Common myeloid progenitor, CD34-positive (primary cell): ENCODE measurements at regions of chr1 and their contacts with region 1.

Region 1: GRCh38 chr1:201023517-201023902 is at the start of gene KIF21B:
- DNase-seq: peak; percentile 72 to 83 (median 81)
- H3K4me3 ChIP-seq: peak within 1 kb of the TSS; percentile 30 to 76 (median 65)
- H3K27ac ChIP-seq: no peak within 1 kb of the TSS
- H3K4me1 ChIP-seq: peaks cover 31 to 94% (median 89%) of the 10 kb centered on the region in 4 experiments
- H3K27me3 ChIP-seq: no peaks in the 10 kb centered on the region

Region 2: DNA sequence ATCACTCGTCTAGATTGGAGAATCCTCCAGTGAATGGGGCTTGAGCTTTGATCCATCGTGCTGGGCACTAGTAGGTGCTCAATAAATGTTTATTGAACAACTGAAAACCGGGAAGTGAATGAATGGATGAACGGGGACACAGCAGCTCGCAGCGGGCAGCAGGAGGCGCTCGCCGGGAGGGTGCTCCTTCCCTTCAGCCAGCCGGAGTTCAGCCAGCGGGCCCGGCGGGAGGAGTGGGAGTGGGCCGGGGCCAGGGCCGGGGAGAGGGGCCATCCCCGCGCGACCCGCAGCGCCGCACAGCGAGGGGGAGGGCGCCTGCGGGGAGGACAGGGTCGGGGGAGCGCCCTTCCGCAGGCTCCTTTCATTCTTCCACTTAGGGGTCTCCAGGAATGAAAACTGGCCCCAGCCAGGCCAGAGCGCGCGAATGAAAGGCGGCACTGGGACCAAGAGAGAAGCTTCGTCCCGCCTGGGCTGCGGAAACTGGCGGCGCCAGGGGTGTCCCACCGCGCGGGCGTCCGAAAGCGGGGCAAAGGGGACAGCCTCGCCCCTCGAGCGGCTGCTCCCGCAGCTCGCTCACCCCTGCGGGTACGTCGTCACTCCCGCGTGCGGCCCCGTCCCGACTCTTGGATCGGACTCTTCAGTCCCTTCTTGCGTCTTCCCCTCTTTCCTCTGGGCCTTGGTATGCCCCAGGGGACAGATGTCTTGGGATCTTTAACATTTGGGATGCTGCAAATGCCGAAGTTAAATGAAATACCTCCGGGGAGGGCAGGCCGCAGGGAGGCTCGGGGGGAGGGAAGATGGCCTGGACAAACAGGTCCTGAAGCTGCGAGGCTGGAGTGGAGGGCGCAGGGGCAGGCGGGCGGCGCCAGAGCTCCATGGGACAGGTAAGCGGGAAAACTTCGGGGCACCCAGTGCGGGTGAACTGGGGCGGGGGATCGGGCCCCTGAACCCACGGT is 132.4 kb before region 1 on chr1:
- CTCF ChIA-PET with region 1: no interaction called
- POLR2A ChIA-PET with region 1: no interaction called
- DNase-seq: peak; percentile 17 to 31 (median 26)
- H3K4me3 ChIP-seq: peak overlapping the region; percentile 11 to 66 (median 54)
- H3K27ac ChIP-seq: no peak overlapping the region
- H3K4me1 ChIP-seq: peaks cover 0 to 64% (median 38%) of the 10 kb centered on the region in 4 experiments
- H3K27me3 ChIP-seq: peaks cover 0 to 50% (median 32%) of the 10 kb centered on the region in 5 experiments

Region 3: GRCh38 chr1:200951016-200951415 is 72.5 kb before region 1 on chr1:
- CTCF ChIA-PET with region 1: no interaction called
- POLR2A ChIA-PET with region 1: no interaction called
- DNase-seq: no peak
- H3K4me3 ChIP-seq: no peak overlapping the region
- H3K27ac ChIP-seq: no peak overlapping the region
- H3K4me1 ChIP-seq: no peaks in the 10 kb centered on the region
- H3K27me3 ChIP-seq: no peaks in the 10 kb centered on the region

Region 4: GRCh38 chr1:200971955-200972711 is 51.4 kb before region 1 on chr1:
- CTCF ChIA-PET with region 1: interaction called, 62 read pairs
- POLR2A ChIA-PET with region 1: no interaction called
- DNase-seq: peak; percentile 53 to 72 (median 64)
- H3K4me3 ChIP-seq: no peak overlapping the region
- H3K27ac ChIP-seq: no peak overlapping the region
- H3K4me1 ChIP-seq: no peaks in the 10 kb centered on the region
- H3K27me3 ChIP-seq: no peaks in the 10 kb centered on the region

Region 5: GRCh38 chr1:200979574-200980451 is 43.7 kb before region 1 on chr1:
- CTCF ChIA-PET with region 1: interaction called, 36 read pairs
- POLR2A ChIA-PET with region 1: no interaction called
- DNase-seq: peak; percentile 20 to 35 (median 22)
- H3K4me3 ChIP-seq: no peak overlapping the region
- H3K27ac ChIP-seq: no peak overlapping the region
- H3K4me1 ChIP-seq: peaks cover 0 to 6% (median 0%) of the 10 kb centered on the region in 4 experiments
- H3K27me3 ChIP-seq: no peaks in the 10 kb centered on the region

Region 6: GRCh38 chr1:200990114-200990513 is 33.4 kb before region 1 on chr1:
- CTCF ChIA-PET with region 1: interaction called, 10 read pairs
- POLR2A ChIA-PET with region 1: no interaction called
- DNase-seq: no peak
- H3K4me3 ChIP-seq: no peak overlapping the region
- H3K27ac ChIP-seq: no peak overlapping the region
- H3K4me1 ChIP-seq: peaks cover 0 to 11% (median 0%) of the 10 kb centered on the region in 4 experiments
- H3K27me3 ChIP-seq: no peaks in the 10 kb centered on the region

Region 7: DNA sequence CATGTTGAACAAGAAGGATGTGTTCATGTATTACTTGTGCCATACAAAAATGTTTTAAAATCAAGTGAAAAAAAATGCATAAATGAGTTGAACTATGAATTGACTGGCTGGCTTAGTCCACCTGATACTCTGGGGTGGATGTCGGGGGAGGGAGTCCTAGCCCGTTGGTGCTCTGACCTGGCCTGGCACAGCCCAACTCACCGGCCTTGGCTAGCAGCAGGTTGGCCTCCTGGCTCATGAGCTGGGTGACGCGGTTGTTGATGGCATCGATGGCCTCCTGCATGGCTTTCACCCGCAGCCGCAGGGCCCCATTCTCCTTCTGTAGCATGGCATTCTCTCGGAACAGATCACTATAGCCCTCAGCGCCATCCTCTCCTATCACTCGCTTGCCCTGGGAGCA is 21.6 kb before region 1 on chr1:
- CTCF ChIA-PET with region 1: interaction called, 10 read pairs
- POLR2A ChIA-PET with region 1: interaction called, 3 read pairs
- DNase-seq: no peak
- H3K4me3 ChIP-seq: no peak overlapping the region
- H3K27ac ChIP-seq: no peak overlapping the region
- H3K4me1 ChIP-seq: no peaks in the 10 kb centered on the region
- H3K27me3 ChIP-seq: no peaks in the 10 kb centered on the region

Region 8: DNA sequence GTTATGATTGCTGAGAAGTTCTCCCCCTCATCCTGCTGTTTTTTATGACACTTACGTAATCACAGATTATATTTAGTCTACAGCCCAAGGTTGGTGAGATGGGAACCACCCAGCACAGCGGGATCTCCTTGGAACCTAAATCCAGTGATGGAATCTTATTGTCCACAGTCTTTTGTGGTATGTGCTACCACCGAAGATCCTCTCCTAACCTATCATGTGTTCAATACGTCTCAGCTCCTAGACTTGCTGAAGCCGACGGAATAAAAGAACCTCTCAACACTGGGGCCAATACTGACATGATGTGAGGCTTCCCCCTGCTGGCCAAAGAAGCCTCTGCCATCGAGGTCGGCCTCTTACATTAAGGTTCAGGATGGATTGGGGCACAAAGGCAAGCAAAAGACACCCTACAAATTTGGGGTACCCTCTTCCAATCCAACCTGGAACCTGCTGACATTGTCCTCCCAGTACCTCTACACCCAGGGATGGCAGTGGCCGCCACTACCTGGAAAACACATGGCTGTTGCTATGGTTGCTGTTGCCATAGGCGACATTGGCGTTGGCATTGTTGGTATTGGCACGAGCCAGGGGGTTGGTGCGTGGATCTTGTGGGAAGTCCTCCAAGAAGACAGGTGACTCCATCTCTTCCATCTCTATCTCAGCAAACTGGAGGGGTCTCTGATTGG is 19.4 kb after region 1 on chr1:
- CTCF ChIA-PET with region 1: interaction called, 133 read pairs
- POLR2A ChIA-PET with region 1: interaction called, 3 read pairs
- DNase-seq: peak; percentile 71 to 88 (median 82)
- H3K4me3 ChIP-seq: no peak overlapping the region
- H3K27ac ChIP-seq: no peak overlapping the region
- H3K4me1 ChIP-seq: peaks cover 0 to 2% (median 0%) of the 10 kb centered on the region in 4 experiments
- H3K27me3 ChIP-seq: peaks cover 0 to 6% (median 3%) of the 10 kb centered on the region in 5 experiments